WTC11 (cell line): ENCODE measurements at regions of chr1 and their contacts with region 1.

Region 1: DNA sequence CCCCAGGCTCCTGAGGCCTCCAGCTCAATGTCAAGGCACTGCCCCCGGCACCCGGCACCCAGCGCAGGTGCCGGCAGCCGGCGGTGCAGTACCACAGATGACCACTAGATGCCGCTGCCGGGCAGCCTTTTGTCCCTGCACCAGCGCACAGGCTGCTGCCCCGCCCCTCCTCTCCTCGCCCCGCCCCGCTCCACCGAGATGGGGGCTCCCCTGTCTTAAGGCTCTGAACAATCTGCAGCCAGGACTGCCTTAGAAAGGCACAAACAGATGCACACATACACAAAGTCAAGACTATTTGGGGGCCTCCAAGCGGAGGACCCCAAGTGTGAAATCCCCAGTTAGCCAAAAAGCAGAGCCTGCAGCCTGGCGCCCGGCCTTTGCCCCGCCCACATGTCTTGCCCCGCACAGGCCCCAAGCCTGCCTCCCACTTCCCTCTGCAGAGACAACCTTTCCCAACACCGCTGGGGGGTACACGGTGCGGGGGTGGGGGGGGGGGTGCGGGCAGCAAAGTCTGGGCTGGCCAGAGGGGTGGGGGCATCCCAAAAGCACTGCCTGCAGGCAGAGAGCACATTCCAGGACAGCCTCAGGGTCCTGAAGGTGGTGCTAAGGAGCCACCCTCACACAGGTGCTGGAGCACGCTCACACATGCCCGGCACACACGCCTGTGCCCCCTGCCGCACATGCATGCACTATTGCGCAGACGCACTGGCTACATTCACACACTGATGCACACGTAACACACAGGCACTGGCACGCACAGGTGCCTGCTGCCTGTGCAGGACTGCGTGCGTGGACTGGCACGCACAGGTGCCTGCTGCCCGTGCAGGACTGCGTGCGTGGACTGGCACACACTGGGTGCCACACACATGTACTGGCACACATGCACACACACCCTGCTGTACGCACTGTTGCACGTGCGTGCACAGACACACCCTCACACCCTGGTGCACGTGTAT is 37.1 kb downstream of the ARHGEF16 start:
- DNase-seq: peak; percentile 87
- ATAC-seq: peak; percentile 85
- H3K4me3 Mint-ChIP-seq: peak overlapping the region; percentile 67
- H3K27ac Mint-ChIP-seq: no peak overlapping the region
- H3K4me1 Mint-ChIP-seq: peaks cover 2% of the 10 kb centered on the region; the same call in 1 of the 2 replicates
- H3K27me3 Mint-ChIP-seq: no peaks in the 10 kb centered on the region; the same call in none of the 2 replicates
- CTCF ChIP-seq: peak; percentile 100

Region 2: DNA sequence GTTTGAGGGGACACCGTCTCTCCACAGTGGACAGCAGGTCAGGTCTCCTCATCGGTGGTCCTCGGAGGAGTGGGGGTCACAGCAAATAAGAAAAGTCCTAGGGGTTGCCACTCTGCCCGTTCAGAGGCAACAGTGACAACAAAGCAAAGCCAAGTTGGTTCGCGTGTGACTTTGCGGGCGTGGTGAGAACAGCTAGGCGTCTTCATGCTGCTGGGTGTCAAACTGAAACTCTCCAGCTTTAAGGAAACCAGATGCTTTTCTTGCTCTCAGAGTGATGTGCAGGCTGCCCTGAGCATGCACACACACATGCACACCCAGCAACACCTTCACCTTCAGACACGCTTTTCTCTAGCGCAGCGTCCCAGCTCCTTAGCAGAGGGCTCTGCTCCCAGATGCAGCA is 107.2 kb before region 1 on chr1:
- CTCF ChIA-PET with region 1: no interaction called
- POLR2A ChIA-PET with region 1: no interaction called
- DNase-seq: no peak
- ATAC-seq: no peak
- H3K4me3 Mint-ChIP-seq: no peak overlapping the region
- H3K27ac Mint-ChIP-seq: no peak overlapping the region
- H3K4me1 Mint-ChIP-seq: no peaks in the 10 kb centered on the region
- H3K27me3 Mint-ChIP-seq: no peaks in the 10 kb centered on the region; the same call in 1 of the 2 replicates
- CTCF ChIP-seq: no peak

Region 3: DNA sequence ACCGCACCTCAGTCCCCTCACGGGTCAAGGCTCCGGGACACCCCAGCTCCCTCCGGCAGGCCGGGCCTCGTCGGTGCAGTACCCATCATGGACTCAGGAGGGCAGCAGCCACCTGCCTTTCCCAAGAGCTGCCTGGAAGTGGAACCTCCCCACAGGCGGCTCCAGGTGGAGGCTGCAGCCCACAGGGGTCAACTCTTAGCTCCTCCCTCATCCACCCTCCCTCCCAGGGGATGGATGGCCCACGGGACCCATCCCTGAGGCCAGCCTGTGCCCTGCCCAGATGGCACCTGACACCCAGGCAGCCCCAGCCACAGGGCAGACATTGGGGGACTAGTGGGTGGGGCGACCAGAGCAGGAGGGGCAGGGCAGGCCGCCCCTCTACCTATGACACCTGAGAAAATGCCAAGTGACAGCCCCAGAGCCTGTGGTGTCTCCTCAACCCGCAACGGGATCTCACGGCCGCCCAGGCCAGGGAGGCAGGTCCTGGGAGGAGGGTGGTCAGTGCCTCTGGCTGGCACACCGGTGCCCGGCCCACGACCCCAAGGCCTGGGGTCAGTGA is 38.3 kb before region 1 on chr1:
- CTCF ChIA-PET with region 1: interaction called, 84 read pairs
- POLR2A ChIA-PET with region 1: no interaction called
- DNase-seq: peak; percentile 92
- ATAC-seq: peak; percentile 63
- H3K4me3 Mint-ChIP-seq: peak overlapping the region; percentile 49
- H3K27ac Mint-ChIP-seq: peak overlapping the region; percentile 70; the same call in 1 of the 2 replicates
- H3K4me1 Mint-ChIP-seq: peaks cover 9% of the 10 kb centered on the region
- H3K27me3 Mint-ChIP-seq: no peaks in the 10 kb centered on the region; the same call in 1 of the 2 replicates
- CTCF ChIP-seq: peak; percentile 78

Region 4: DNA sequence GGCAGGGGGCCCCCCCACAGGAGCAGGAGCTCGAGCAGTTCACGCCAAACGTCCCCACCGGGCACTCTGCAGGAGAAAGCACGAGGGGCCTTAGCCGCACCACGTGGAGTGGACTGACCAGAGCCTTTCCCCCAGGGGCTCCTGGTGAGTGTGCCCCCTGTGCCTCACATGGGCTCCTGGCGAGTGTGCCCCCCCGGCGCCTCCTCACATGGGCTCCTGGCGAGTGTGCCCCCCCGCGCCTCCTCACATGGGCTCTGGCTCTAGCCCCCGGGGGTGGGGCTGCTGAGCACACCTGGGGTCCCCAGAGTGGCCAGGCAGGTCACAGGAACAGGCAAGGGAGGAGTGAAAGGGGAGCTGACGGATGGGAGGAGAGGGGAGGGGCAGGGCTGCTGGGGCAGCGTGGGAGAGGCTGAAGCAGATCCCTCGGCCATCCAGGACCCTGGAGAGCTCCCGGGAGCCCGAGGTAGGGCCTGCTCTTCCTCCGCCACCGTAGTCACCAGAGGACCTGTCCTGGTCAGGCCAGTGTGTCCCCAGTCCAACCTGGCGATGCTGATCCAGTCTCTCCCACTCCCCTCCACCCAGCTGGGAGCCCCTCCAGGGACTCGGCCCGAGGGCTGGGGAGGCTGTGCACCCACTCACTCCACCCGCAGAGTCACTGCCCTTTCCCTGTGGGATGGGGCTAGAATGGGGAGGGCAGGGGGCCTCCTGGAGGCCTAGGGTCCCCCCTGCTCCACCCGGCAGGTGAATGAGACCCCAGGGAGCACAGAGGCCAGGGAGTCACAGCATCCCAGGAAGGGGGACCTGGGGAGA is 10.5 kb after region 1 on chr1:
- CTCF ChIA-PET with region 1: interaction called, 71 read pairs
- POLR2A ChIA-PET with region 1: no interaction called
- DNase-seq: peak; percentile 90
- ATAC-seq: peak; percentile 90
- H3K4me3 Mint-ChIP-seq: no peak overlapping the region
- H3K27ac Mint-ChIP-seq: no peak overlapping the region
- H3K4me1 Mint-ChIP-seq: no peaks in the 10 kb centered on the region
- H3K27me3 Mint-ChIP-seq: no peaks in the 10 kb centered on the region
- CTCF ChIP-seq: no peak

Region 5: DNA sequence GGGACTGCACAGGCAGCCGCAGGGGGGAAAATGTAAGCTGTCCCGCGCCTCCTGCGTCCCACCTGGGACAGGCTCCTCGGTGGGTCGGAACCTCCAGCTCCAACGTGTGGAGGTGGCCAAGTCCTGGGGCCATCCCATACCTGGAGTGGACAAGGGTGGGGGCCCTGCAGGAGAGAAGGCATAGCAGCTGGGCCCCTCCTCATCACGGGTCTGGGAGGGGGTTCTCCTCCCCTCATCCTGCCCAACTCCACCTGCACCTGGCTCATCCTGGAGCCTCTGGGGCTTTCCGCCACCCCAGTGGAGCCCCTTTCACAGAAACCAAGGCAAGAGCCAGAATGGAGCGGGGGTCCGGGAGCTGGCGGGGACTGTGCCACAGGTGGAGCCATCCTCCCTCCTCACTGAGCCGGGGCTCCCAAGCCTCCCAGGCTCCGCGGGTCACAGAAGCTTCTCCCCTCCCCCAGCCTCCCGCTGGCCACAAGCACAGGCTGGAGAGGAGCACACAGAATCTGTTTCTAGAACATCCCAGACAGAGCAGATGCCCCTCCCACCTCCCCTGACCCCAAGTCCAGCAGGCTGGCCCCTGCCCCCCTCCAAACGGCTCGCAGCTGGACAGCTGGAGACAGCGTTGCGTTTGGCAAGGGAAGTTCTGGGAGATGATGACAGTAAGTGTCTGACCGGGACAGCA is 53.9 kb after region 1 on chr1:
- CTCF ChIA-PET with region 1: interaction called, 10 read pairs
- POLR2A ChIA-PET with region 1: no interaction called
- DNase-seq: peak; percentile 29
- ATAC-seq: no peak
- H3K4me3 Mint-ChIP-seq: no peak overlapping the region
- H3K27ac Mint-ChIP-seq: no peak overlapping the region
- H3K4me1 Mint-ChIP-seq: no peaks in the 10 kb centered on the region
- H3K27me3 Mint-ChIP-seq: no peaks in the 10 kb centered on the region
- CTCF ChIP-seq: no peak

Region 6: DNA sequence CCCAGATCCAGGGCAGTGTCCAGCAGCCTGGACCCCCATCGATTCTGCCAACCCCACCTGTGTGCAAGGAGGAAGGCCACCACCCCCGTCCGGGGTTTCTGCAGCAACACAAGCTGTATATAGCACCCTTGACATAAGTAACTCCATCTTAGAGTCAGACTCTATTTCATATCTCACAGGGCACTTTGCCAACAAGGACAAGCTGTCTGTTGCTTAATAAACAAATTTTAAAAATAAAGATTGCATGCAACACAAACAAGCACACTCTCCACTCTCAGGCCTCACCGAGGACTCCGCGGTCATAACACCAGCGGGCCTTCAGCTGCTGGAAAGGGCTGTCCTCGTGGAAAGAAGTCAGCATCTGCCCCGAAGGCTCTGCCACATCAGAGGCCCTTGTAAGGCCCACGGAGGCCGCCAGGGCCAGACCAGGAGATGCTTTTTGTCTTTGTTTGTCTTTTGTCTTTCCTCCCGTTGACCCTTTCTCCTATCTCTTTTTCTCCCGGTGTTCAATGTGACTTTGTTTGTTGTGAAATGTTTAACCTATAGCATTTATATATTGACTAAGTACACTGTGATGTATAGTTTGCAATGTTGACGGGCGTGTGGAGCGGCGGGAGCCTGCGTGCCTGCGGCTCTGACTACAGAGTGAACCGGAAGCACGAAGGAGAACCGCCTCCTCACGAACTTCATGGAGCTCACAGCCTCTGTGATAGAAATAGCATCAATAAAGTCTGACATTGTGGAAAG is 95.5 kb after region 1 on chr1:
- CTCF ChIA-PET with region 1: interaction called, 10 read pairs
- POLR2A ChIA-PET with region 1: no interaction called
- DNase-seq: no peak
- ATAC-seq: no peak
- H3K4me3 Mint-ChIP-seq: no peak overlapping the region
- H3K27ac Mint-ChIP-seq: peak overlapping the region; percentile 65
- H3K4me1 Mint-ChIP-seq: 0 out of 2 replicates have a peak, but pooled peaks cover 2% of the 10 kb centered on the region
- H3K27me3 Mint-ChIP-seq: no peaks in the 10 kb centered on the region
- CTCF ChIP-seq: no peak